WTC11 (cell line): ENCODE measurements at regions of chr11 and their contacts with region 1.

Region 1: GRCh38 chr11:9534791-9535781 is 38.4 kb upstream of the WEE1 start:
- DNase-seq: peak; percentile 89
- ATAC-seq: peak; percentile 66
- H3K4me3 Mint-ChIP-seq: no peak overlapping the region
- H3K27ac Mint-ChIP-seq: peak overlapping the region; percentile 84; the same call in 1 of the 2 replicates
- H3K4me1 Mint-ChIP-seq: peaks cover 37% of the 10 kb centered on the region
- H3K27me3 Mint-ChIP-seq: no peaks in the 10 kb centered on the region
- CTCF ChIP-seq: peak; percentile 93

Region 2: GRCh38 chr11:9506489-9507276 is 28.4 kb before region 1 on chr11:
- CTCF ChIA-PET with region 1: interaction called, 50 read pairs
- POLR2A ChIA-PET with region 1: no interaction called
- DNase-seq: peak; percentile 84
- ATAC-seq: peak; percentile 95
- H3K4me3 Mint-ChIP-seq: peak overlapping the region; percentile 3; the same call in 1 of the 2 replicates
- H3K27ac Mint-ChIP-seq: peak overlapping the region; percentile 95
- H3K4me1 Mint-ChIP-seq: peaks cover 26% of the 10 kb centered on the region
- H3K27me3 Mint-ChIP-seq: no peaks in the 10 kb centered on the region
- CTCF ChIP-seq: peak; percentile 76

Region 3: DNA sequence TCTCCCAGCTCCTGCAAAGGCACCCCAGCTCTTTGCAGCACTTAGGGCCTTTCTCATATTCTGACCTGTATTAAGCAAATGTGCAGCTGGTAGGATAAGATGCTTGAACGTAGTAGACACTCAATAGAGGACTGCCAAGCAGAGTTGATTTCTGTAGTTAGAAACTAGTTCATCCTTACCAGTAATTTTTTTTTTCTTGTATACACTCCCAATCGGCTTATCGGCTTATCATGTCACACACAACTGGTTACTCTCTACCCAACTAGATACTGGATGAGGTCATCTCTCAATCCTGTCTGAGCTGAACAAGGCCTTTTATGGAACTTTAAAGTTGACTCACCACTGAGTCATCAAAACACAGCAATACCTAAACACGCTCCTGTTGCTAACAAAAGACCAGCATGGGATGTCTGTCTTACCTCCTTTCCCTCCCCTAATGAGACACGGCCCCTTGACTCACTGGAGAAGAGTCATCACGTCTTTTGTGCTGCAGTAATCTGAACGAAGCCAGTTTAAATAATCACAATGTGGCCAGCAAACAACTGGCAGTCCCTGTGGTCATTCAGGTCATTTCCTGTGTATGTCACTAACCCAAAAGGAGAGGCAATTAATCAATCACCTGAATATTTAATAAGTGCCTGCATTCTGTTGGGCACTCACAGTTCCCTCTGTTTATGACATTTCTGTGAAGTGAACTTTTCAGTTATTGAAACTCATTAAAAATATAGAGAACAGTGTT is 30.9 kb after region 1 on chr11:
- CTCF ChIA-PET with region 1: interaction called, 49 read pairs
- POLR2A ChIA-PET with region 1: no interaction called
- DNase-seq: peak; percentile 19
- ATAC-seq: peak; percentile 77
- H3K4me3 Mint-ChIP-seq: no peak overlapping the region
- H3K27ac Mint-ChIP-seq: peak overlapping the region; percentile 99
- H3K4me1 Mint-ChIP-seq: peaks cover 47% of the 10 kb centered on the region
- H3K27me3 Mint-ChIP-seq: no peaks in the 10 kb centered on the region
- CTCF ChIP-seq: no peak

Region 4: DNA sequence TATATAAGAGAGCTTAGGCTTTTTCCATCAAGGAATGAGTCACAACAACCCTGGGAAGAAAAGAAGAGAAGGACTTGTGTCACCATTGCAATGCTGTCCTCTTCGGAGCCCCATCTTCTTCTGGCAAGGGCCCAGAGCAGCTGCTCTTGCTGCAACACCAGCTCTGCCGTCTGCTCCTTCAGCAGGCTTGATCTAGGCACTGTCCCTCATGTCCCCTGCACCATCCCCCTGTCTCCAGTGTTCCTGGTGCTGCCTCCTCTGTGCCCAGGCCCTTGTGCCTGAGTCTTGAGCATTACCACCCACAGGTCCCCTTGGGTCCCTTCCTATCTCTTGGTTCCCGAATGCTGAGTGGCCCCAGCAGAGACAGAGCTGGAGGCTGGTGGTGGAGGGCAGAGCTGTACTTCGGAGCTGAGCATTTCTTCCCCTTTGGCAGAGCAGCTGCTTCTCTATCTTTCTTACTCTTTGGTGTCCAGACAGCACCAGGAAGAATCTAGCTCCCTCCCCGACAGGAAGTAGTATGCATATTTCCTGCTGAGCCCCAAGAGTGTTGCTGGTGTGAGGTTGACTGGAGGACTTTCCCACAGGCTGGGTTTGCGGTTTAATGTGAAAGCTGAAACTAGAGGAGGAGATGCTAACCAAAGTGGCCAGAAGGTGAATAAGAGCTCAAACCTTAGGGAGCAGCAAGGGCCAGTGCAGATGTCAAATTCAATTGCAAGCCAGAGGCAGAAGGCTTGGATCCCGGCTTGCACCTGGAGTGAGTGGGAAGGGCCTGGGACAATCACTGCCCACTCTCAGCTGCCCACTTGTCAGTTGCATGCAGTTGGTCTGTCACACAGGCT is 66.2 kb after region 1 on chr11:
- CTCF ChIA-PET with region 1: interaction called, 20 read pairs
- POLR2A ChIA-PET with region 1: no interaction called
- DNase-seq: peak; percentile 36
- ATAC-seq: peak; percentile 91
- H3K4me3 Mint-ChIP-seq: 0 out of 2 replicates have a peak overlapping the region, but pooled peaks have one; percentile 3
- H3K27ac Mint-ChIP-seq: peak overlapping the region; percentile 90
- H3K4me1 Mint-ChIP-seq: peaks cover 24% of the 10 kb centered on the region
- H3K27me3 Mint-ChIP-seq: no peaks in the 10 kb centered on the region
- CTCF ChIP-seq: no peak

Region 5: GRCh38 chr11:9613118-9613829 is 78.2 kb after region 1 on chr11:
- CTCF ChIA-PET with region 1: interaction called, 44 read pairs
- POLR2A ChIA-PET with region 1: interaction called, 5 read pairs
- DNase-seq: peak; percentile 95
- ATAC-seq: peak; percentile 82
- H3K4me3 Mint-ChIP-seq: peak overlapping the region; percentile 79
- H3K27ac Mint-ChIP-seq: peak overlapping the region; percentile 95
- H3K4me1 Mint-ChIP-seq: peaks cover 32% of the 10 kb centered on the region
- H3K27me3 Mint-ChIP-seq: no peaks in the 10 kb centered on the region
- CTCF ChIP-seq: peak; percentile 82

Region 6: DNA sequence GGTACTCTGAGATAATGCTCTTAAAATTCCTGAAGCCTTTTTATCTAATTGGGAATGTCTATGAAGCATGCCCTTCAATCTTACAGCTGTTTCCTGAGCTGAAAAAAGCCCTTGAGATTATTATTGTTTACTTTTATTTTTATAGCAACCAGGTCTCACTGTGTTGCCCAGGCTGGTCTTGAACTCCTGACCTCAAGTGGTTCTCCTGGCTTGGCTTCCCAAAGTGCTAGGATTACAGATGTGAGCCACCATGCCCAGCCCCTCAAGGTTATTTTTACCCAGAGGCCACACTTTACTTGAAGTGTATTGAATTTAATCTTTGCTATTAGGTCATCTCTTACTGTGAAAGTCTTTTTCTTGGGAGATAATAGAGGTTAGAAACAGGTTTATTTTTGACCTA is 121.8 kb after region 1 on chr11:
- CTCF ChIA-PET with region 1: no interaction called
- POLR2A ChIA-PET with region 1: no interaction called
- DNase-seq: no peak
- ATAC-seq: no peak
- H3K4me3 Mint-ChIP-seq: no peak overlapping the region
- H3K27ac Mint-ChIP-seq: no peak overlapping the region
- H3K4me1 Mint-ChIP-seq: no peaks in the 10 kb centered on the region
- H3K27me3 Mint-ChIP-seq: no peaks in the 10 kb centered on the region; the same call in 1 of the 2 replicates
- CTCF ChIP-seq: no peak

Region 7: GRCh38 chr11:9748361-9748970 is 213.4 kb after region 1 on chr11:
- CTCF ChIA-PET with region 1: interaction called, 37 read pairs
- POLR2A ChIA-PET with region 1: no interaction called
- DNase-seq: peak; percentile 52
- ATAC-seq: peak; percentile 93
- H3K4me3 Mint-ChIP-seq: no peak overlapping the region
- H3K27ac Mint-ChIP-seq: peak overlapping the region; percentile 64; the same call in 1 of the 2 replicates
- H3K4me1 Mint-ChIP-seq: peaks cover 15% of the 10 kb centered on the region
- H3K27me3 Mint-ChIP-seq: no peaks in the 10 kb centered on the region
- CTCF ChIP-seq: peak; percentile 18; the same call in 1 of the 2 replicates